MCF 10A (cell line): ENCODE measurements at regions of chr3 and their contacts with region 1.

Region 1: GRCh38 chr3:179309225-179310078 is 13.4 kb upstream of the ZNF639 start:
- DNase-seq: no peak
- H3K4me3 Mint-ChIP-seq: no peak overlapping the region
- H3K27ac Mint-ChIP-seq: no peak overlapping the region
- H3K4me1 Mint-ChIP-seq: no peaks in the 10 kb centered on the region
- H3K27me3 Mint-ChIP-seq: no peaks in the 10 kb centered on the region
- CTCF ChIP-seq: no peak

Region 2: GRCh38 chr3:178405531-178405930 is 903.9 kb before region 1 on chr3:
- CTCF ChIA-PET with region 1: no interaction called
- POLR2A ChIA-PET with region 1: no interaction called
- intact Hi-C with region 1: no loop called
- DNase-seq: no peak
- H3K4me3 Mint-ChIP-seq: no peak overlapping the region
- H3K27ac Mint-ChIP-seq: no peak overlapping the region
- H3K4me1 Mint-ChIP-seq: no peaks in the 10 kb centered on the region
- H3K27me3 Mint-ChIP-seq: no peaks in the 10 kb centered on the region
- CTCF ChIP-seq: no peak

Region 3: GRCh38 chr3:178443634-178444033 is 865.8 kb before region 1 on chr3:
- CTCF ChIA-PET with region 1: interaction called, 3 read pairs
- POLR2A ChIA-PET with region 1: no interaction called
- intact Hi-C with region 1: loop called (anchors 10 kb)
- DNase-seq: peak; percentile 23
- H3K4me3 Mint-ChIP-seq: no peak overlapping the region
- H3K27ac Mint-ChIP-seq: no peak overlapping the region
- H3K4me1 Mint-ChIP-seq: peaks cover 4% of the 10 kb centered on the region
- H3K27me3 Mint-ChIP-seq: no peaks in the 10 kb centered on the region
- CTCF ChIP-seq: peak; percentile 33

Region 4: GRCh38 chr3:179098388-179099077 is 210.9 kb before region 1 on chr3:
- CTCF ChIA-PET with region 1: interaction called, 99 read pairs
- POLR2A ChIA-PET with region 1: no interaction called
- intact Hi-C with region 1: no loop called
- DNase-seq: peak; percentile 74
- H3K4me3 Mint-ChIP-seq: peak overlapping the region; percentile 48
- H3K27ac Mint-ChIP-seq: peak overlapping the region; percentile 35
- H3K4me1 Mint-ChIP-seq: peaks cover 7% of the 10 kb centered on the region
- H3K27me3 Mint-ChIP-seq: no peaks in the 10 kb centered on the region
- CTCF ChIP-seq: peak; percentile 22

Region 5: GRCh38 chr3:179336345-179336929 is 27.0 kb after region 1 on chr3:
- CTCF ChIA-PET with region 1: no interaction called
- POLR2A ChIA-PET with region 1: no interaction called
- intact Hi-C with region 1: no loop called
- DNase-seq: no peak
- H3K4me3 Mint-ChIP-seq: no peak overlapping the region
- H3K27ac Mint-ChIP-seq: no peak overlapping the region
- H3K4me1 Mint-ChIP-seq: no peaks in the 10 kb centered on the region
- H3K27me3 Mint-ChIP-seq: no peaks in the 10 kb centered on the region
- CTCF ChIP-seq: no peak

Region 6: GRCh38 chr3:179369621-179370020 is 60.2 kb after region 1 on chr3:
- CTCF ChIA-PET with region 1: no interaction called
- POLR2A ChIA-PET with region 1: no interaction called
- intact Hi-C with region 1: no loop called
- DNase-seq: no peak
- H3K4me3 Mint-ChIP-seq: no peak overlapping the region
- H3K27ac Mint-ChIP-seq: no peak overlapping the region
- H3K4me1 Mint-ChIP-seq: no peaks in the 10 kb centered on the region
- H3K27me3 Mint-ChIP-seq: no peaks in the 10 kb centered on the region
- CTCF ChIP-seq: no peak